ENCODE measurements at regions of chr1 and their contacts with region 1.

Region 1: DNA sequence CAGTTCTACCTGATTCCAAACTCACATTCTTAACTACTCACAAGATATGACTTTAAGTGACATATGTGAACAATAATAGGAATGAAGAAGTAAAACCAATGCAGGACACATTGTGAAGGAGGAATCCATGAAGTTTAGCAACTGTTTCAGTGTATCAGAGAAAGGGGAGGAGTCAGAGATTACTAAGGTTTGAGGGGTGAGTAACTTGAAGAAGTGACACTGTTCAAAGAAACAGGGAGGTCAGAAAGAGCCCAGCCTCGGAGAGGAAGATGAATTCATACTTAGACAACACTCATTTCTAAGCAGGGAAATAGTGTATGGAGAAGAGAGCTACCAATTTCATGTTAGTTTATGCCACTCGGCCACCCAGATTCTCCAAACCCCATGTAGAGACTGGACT is 28.2 kb upstream of the RPF1 start:
- ATAC-seq: no peak
- H3K4me3 ChIP-seq: no peak overlapping the region
- H3K27ac ChIP-seq: no peak overlapping the region
- H3K4me1 ChIP-seq: no peaks in the 10 kb centered on the region

Region 2: GRCh38 chr1:83905315-83905907 is 545.5 kb before region 1 on chr1:
- in situ Hi-C with region 1: loop called in 1 of 9 experiments (anchors 25 kb)
- ATAC-seq: no peak
- H3K4me3 ChIP-seq: no peak overlapping the region
- H3K27ac ChIP-seq: no peak overlapping the region
- H3K4me1 ChIP-seq: no peaks in the 10 kb centered on the region

Region 3: GRCh38 chr1:83931658-83932253 is 519.2 kb before region 1 on chr1:
- in situ Hi-C with region 1: loop called in 4 of 9 experiments (anchors 25 kb)
- ATAC-seq: peak; percentile 51 to 78 (median 67)
- H3K4me3 ChIP-seq: no peak overlapping the region
- H3K27ac ChIP-seq: no peak overlapping the region
- H3K4me1 ChIP-seq: no peaks in the 10 kb centered on the region